Activated CD8-positive, alpha-beta memory T cell treated with anti-CD3 and anti-CD28 coated beads, Interleukin-2, amount 10 ng/mL, durations not matched to agents 7 days and 5 days (primary cell): ENCODE measurements at regions of chr3 and their contacts with region 1.

Region 1: GRCh38 chr3:15629860-15630597 is 28.5 kb downstream of the BTD start:
- DNase-seq: peak; percentile 84
- ATAC-seq: peak; percentile 99
- H3K4me3 Mint-ChIP-seq: peak overlapping the region; percentile 36
- H3K27ac Mint-ChIP-seq: peak overlapping the region; percentile 73
- H3K4me1 Mint-ChIP-seq: peaks cover 24% of the 10 kb centered on the region
- H3K27me3 Mint-ChIP-seq: no peaks in the 10 kb centered on the region

Region 2: GRCh38 chr3:15647611-15648167 is 17.7 kb after region 1 on chr3:
- CTCF ChIA-PET with region 1: interaction called, 13 read pairs
- DNase-seq: peak; percentile 90
- ATAC-seq: peak; percentile 88
- H3K4me3 Mint-ChIP-seq: peak overlapping the region; percentile 35
- H3K27ac Mint-ChIP-seq: peak overlapping the region; percentile 74
- H3K4me1 Mint-ChIP-seq: peaks cover 42% of the 10 kb centered on the region
- H3K27me3 Mint-ChIP-seq: peaks cover 19% of the 10 kb centered on the region

Region 3: DNA sequence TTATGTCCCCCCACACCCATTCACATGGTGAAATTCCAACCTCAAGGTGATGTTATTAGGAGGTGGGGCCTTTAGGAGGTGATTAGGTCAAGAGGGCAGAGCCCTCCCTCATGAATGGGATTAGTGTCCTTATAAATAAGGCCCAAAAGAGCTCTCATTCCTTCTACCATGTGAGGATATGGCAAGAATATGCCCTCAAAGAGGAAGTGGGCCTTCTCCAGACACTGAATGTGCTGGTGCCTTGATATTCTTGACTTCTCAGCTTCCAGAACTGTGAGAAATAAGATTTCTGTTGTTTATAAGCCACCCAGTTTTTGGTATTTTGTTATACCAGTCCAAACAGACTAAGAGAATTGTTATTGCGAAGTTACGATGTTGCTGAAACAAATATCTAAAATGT is 73.3 kb after region 1 on chr3:
- CTCF ChIA-PET with region 1: no interaction called
- DNase-seq: no peak
- ATAC-seq: no peak
- H3K4me3 Mint-ChIP-seq: no peak overlapping the region
- H3K27ac Mint-ChIP-seq: no peak overlapping the region
- H3K4me1 Mint-ChIP-seq: no peaks in the 10 kb centered on the region
- H3K27me3 Mint-ChIP-seq: no peaks in the 10 kb centered on the region

Region 4: DNA sequence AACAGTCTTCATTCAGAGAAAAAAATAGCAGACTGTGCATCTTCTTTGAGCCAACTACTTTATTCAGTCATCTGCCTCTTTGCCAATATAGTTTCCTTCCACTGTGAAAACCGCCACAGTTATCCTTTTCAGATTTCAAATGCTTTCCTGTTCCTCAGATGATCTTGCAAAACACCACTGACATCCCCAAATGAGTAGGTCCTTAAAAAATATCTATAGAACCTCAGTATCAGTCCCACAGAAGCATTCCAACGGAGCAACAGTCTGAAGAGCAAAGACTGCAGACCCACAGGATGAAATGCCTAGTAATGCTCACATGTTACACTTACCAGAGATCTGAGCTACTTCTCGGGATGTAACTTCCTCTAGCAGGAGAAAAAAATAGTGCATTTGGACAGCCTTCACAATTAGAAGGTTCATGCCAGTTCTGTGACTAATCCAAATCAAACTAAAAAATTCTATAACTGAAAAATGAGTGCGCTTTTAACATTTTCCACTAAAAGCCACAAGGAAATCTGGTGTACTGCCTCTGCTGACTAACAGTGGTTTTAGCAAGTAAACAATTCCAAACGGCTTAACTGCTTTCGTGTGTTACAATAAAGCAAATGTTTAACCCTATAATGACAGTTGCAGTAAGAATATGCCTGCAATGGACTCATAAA is 167.7 kb after region 1 on chr3 and contains the start of gene ANKRD28:
- CTCF ChIA-PET with region 1: interaction called, 12 read pairs
- DNase-seq: peak; percentile 51
- ATAC-seq: peak; percentile 49
- H3K4me3 Mint-ChIP-seq: peak within 1 kb of the TSS; percentile 88
- H3K27ac Mint-ChIP-seq: peak within 1 kb of the TSS; percentile 98
- H3K4me1 Mint-ChIP-seq: peaks cover 70% of the 10 kb centered on the region
- H3K27me3 Mint-ChIP-seq: no peaks in the 10 kb centered on the region
- total RNA-seq, gene ANKRD28: 56.3 to 73.6 TPM

Region 5: GRCh38 chr3:15805756-15806266 is 175.8 kb after region 1 on chr3:
- CTCF ChIA-PET with region 1: interaction called, 83 read pairs
- DNase-seq: no peak
- ATAC-seq: peak; percentile 20
- H3K4me3 Mint-ChIP-seq: peak overlapping the region; percentile 26
- H3K27ac Mint-ChIP-seq: peak overlapping the region; percentile 86
- H3K4me1 Mint-ChIP-seq: peaks cover 78% of the 10 kb centered on the region
- H3K27me3 Mint-ChIP-seq: no peaks in the 10 kb centered on the region